Psoas muscle (tissue), 8 donors: ENCODE measurements at regions of chr7 and their contacts with region 1.

Region 1: GRCh38 chr7:9863545-9863944 is 1110.1 kb upstream of the PHF14 start:
- DNase-seq: no peak
- ATAC-seq: no peak
- H3K4me3 ChIP-seq: no peak overlapping the region
- H3K27ac ChIP-seq: no peak overlapping the region
- H3K4me1 ChIP-seq: no peaks in the 10 kb centered on the region
- H3K27me3 ChIP-seq: no peaks in the 10 kb centered on the region
- CTCF ChIP-seq: no peak

Region 2: DNA sequence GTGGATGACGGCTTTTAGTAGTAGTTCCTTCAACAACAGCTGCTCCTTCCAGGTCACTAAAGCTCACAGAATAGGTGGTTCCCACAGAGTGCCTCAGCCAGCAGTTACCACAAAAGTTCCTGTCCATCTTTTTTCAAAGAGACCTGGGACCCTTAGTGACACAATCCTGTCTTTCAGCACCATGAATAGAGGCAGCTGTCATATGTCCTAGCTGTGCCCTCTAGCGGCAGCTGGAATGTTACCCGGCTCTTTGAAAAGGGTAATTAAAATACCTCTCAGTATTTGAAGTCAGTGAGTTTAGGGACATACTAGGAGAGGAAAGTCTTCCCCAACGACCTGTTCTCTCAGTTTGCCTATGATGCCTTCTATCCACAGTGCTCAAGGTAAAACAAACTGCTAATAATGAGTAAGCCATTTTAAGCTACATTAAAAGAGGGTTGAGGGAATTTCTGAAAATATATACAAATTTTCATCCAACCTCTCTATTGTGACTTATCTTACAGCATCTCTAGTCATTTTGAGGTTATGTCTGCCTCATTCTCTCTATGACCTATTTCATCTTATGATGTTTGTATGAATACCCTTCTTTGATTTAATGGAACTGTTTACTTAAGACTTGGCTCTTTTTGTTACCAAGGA is 1139.3 kb before region 1 on chr7:
- intact Hi-C with region 1: loop called in 1 of 2 experiments (anchors 5 kb)
- DNase-seq: no peak
- ATAC-seq: no peak
- H3K4me3 ChIP-seq: no peak overlapping the region
- H3K27ac ChIP-seq: no peak overlapping the region
- H3K4me1 ChIP-seq: no peaks in the 10 kb centered on the region
- H3K27me3 ChIP-seq: no peaks in the 10 kb centered on the region
- CTCF ChIP-seq: peak; percentile 19